ENCODE measurements at regions of chr11 and their contacts with region 1.

Region 1: DNA sequence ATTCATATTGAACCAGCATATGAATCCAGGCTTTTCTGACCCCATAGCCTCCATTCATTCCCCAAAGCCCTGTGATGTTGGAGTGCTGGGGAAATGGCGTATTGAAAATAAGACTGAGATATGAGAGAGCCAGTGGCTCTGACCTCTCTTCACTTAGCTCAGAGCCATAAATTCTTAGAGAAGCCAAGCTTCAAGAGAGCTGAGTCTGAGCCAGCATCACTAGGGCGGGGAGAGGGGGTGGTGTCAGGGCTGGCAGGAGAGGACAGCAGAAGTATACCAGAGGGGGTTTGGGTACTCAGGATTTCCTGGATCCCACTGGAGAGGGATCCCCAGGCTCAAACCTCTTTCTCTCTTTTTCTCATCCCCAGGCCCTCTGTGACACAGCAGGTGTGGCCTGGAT is 16.7 kb upstream of the MOGAT2 start:
- DNase-seq: no peak
- ATAC-seq: no peak
- H3K4me3 ChIP-seq: no peak overlapping the region
- H3K27ac ChIP-seq: no peak overlapping the region
- H3K4me1 ChIP-seq: no peaks in the 10 kb centered on the region
- H3K27me3 ChIP-seq: no peaks in the 10 kb centered on the region

Region 2: DNA sequence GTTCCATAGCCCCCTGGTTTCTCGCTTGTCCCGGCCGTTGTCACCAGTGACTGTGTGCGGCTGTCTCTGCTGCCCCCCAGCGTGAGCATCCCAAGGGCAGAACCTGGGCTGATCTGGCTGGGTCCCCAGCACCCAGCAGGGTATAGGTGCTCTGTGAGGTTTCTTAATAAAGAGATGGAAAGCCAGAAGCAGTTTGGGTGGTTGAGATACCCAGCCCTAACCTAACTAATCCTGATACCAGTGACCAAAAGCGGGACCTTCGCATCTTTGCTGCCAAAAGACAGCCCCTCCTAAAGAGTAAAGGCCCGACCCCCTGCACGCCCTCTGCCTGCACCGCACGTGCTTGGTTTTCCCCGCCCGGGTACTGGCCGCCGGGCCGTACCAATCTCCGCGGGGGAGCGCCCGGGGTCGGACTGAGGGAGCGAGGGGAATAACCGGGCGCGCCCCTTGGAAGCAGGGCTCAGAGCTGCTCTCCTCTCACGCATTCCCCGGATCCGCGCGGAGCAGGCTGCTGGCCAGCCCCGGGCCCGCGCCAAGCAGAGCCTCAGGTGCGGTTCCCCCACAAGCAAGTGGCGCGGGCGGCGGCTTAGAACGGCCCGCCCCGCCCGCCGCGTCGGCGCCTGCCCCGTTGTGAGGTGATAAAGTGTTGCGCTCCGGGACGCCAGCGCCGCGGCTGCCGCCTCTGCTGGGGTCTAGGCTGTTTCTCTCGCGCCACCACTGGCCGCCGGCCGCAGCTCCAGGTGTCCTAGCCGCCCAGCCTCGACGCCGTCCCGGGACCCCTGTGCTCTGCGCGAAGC is 67.4 kb after region 1 on chr11 and contains the start of gene DGAT2:
- intact Hi-C with region 1: loop called in 1 of 2 experiments (anchors 5 kb)
- DNase-seq: peak; percentile 81 to 93
- ATAC-seq: peak; percentile 89
- H3K4me3 ChIP-seq: peak within 1 kb of the TSS; percentile 4 to 24
- H3K27ac ChIP-seq: no peak within 1 kb of the TSS
- H3K4me1 ChIP-seq: no peaks in the 10 kb centered on the region
- H3K27me3 ChIP-seq: no peaks in the 10 kb centered on the region
- total RNA-seq, gene DGAT2: 2.3 to 4.4 TPM